Right ventricle myocardium inferior (tissue), 1 donor: ENCODE measurements at regions of chr3 and their contacts with region 1.

Region 1: GRCh38 chr3:194472290-194472920 is 14.4 kb downstream of the ATP13A3 start:
- DNase-seq: no peak
- ATAC-seq: peak; percentile 59

Region 2: DNA sequence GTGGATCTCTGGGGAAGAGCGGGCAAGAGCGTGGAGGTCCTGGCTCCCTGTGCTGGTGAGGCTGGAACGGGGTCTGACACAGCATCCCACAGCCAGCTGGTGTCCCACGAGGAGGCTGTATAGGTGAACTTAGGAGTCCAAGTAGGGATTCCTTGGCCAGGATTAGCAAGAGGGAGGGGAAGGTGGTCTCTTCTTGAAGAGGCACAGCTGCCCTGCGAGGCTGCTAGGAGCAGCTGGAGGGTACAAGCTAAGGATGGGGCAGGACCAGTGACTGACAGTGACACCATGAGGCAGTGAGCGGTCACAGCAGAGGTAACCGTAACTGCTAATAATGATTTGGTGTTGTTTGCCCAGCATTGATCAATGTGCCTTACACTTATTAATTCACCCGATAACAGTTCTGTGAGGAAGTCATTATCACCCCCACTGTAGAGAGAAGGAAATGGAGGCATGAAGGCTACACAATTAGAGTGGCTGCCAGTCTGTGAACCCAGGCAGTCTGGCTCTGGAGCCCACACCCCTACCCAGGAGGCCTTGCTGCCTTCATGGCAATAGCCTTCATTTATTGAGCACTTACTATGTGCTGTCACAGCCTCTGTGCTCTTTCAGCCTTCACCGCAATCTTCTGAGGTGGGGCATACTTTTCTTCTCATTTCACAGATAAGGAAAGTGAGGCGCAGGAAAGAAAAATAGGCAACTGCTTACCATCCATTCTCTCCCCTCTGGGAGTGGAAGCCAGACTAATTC is 101.5 kb after region 1 on chr3:
- intact Hi-C with region 1: loop called (anchors 2 kb)
- DNase-seq: no peak
- ATAC-seq: peak; percentile 56

Region 3: DNA sequence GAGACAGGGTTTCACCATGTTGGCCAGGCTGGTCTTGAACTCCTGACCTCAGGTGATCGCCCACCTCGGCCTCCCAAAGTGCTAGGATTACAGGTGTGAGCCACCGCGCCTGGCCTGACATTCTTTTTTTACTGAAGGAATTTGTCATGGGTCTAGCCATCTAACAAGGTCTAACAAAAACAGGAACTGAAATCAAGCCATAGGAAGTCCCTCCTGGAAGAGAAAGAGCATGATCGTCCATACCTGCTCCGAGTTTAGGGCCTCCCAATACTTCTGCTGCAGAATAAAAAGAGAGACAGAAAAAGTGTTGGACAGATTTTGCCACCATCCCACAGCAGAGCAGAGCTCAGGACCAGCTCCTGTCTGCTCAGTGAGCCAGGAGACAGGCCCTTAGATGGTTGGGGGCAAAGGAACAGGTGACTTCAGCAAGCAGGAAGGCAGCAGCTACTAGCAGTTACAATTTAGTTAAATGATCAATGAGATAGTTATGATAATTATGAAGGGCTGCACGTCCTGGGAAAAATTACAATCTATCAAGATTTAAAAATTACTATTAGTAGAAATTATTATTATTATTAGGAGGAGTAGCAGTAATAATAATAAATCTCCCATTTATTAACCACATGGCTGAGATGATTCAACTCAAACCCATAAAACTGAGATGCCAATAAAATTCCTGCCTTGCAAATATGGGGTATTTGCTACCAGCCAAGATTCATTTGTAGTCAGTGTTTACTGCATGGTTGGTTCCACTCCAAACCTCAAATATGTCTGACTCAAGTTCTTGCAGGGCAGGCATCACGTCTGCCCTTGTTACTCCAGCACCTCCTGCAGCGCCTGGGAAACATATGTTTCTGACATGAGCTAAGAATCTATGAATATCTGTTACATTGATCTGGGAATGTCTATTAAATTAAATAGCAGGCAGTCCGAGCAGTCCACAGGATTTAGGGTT is 120.7 kb after region 1 on chr3:
- intact Hi-C with region 1: loop called (anchors 1 kb)
- DNase-seq: no peak
- ATAC-seq: no peak